ENCODE measurements at regions of chr6 and their contacts with region 1.

Region 1: GRCh38 chr6:35552285-35552917 is 39.7 kb upstream of the TULP1 start:
- DNase-seq: peak; percentile 82
- ATAC-seq: peak; percentile 88
- H3K4me3 Mint-ChIP-seq: no peak overlapping the region
- H3K27ac Mint-ChIP-seq: no peak overlapping the region
- H3K4me1 Mint-ChIP-seq: peaks cover 4% of the 10 kb centered on the region
- H3K27me3 Mint-ChIP-seq: no peaks in the 10 kb centered on the region
- CTCF ChIP-seq: peak; percentile 94

Region 2: DNA sequence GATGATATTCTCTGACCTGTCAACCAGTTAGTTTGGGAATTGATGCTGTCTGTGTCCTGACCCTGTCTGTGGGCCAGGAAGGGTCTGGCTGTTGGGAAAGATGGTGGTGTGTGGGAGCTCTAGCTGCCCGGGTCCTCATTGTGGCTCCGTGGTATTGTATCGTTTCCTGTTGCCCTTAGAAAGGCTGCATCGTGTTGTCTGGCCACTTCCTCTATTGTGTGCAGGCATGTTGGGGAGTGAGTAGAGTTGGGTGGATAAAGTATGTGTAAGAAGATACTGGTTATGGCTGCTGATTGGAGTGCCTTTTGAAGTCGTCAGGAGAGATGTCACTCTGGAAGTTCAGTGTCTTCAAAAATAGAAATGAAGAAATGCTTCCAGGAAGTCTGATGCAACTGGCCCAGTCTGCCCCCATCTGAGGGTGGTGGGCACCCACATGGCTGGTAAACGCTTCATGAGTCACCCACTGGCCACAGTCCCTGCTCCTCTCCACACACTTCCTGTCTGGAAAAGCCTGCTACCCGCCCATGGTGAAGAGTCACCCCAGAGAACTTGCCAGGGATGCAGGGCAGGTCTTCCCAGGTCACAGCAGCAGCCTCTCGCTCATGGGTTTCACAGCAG is 182.2 kb before region 1 on chr6:
- CTCF ChIA-PET with region 1: no interaction called
- POLR2A ChIA-PET with region 1: no interaction called
- intact Hi-C with region 1: no loop called
- DNase-seq: peak; percentile 68
- ATAC-seq: peak; percentile 79
- H3K4me3 Mint-ChIP-seq: peak overlapping the region; percentile 40
- H3K27ac Mint-ChIP-seq: peak overlapping the region; percentile 94
- H3K4me1 Mint-ChIP-seq: peaks cover 57% of the 10 kb centered on the region
- H3K27me3 Mint-ChIP-seq: no peaks in the 10 kb centered on the region
- CTCF ChIP-seq: no peak

Region 3: DNA sequence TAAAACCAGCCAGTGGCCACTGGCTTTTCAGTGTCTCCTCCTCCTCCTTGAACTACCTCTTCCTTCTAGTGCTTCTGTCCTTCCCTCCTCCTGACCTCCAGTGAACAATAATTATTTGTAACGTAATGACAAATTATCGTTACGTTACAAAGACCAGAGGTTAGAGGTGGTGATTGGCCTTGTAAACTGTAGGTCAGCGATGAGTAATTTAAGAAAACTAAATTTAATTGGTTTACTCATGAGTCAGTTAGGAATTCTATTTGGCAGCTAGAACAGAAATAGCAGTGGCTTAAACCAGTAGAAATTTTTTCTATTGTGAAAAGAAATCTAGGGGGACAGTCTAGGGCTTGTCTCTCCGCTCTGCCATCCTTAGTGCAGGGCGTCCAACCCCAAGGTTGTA is 171.3 kb before region 1 on chr6:
- CTCF ChIA-PET with region 1: no interaction called
- POLR2A ChIA-PET with region 1: no interaction called
- intact Hi-C with region 1: no loop called
- DNase-seq: no peak
- ATAC-seq: no peak
- H3K4me3 Mint-ChIP-seq: no peak overlapping the region
- H3K27ac Mint-ChIP-seq: no peak overlapping the region
- H3K4me1 Mint-ChIP-seq: peaks cover 30% of the 10 kb centered on the region
- H3K27me3 Mint-ChIP-seq: no peaks in the 10 kb centered on the region
- CTCF ChIP-seq: no peak

Region 4: GRCh38 chr6:35573495-35574110 is 21.2 kb after region 1 on chr6:
- CTCF ChIA-PET with region 1: interaction called, 19 read pairs
- POLR2A ChIA-PET with region 1: no interaction called
- intact Hi-C with region 1: no loop called
- DNase-seq: no peak
- ATAC-seq: no peak
- H3K4me3 Mint-ChIP-seq: no peak overlapping the region
- H3K27ac Mint-ChIP-seq: no peak overlapping the region
- H3K4me1 Mint-ChIP-seq: peaks cover 2% of the 10 kb centered on the region
- H3K27me3 Mint-ChIP-seq: no peaks in the 10 kb centered on the region
- CTCF ChIP-seq: no peak

Measured in activated CD8-positive, alpha-beta T cell treated with anti-CD3 and anti-CD28 coated beads for 36 hours (primary cell).